Activated B cell treated with CpG ODN at 0.5 μM for 24 hours (primary cell): ENCODE measurements at regions of chr14 and their contacts with region 1.

Region 1: DNA sequence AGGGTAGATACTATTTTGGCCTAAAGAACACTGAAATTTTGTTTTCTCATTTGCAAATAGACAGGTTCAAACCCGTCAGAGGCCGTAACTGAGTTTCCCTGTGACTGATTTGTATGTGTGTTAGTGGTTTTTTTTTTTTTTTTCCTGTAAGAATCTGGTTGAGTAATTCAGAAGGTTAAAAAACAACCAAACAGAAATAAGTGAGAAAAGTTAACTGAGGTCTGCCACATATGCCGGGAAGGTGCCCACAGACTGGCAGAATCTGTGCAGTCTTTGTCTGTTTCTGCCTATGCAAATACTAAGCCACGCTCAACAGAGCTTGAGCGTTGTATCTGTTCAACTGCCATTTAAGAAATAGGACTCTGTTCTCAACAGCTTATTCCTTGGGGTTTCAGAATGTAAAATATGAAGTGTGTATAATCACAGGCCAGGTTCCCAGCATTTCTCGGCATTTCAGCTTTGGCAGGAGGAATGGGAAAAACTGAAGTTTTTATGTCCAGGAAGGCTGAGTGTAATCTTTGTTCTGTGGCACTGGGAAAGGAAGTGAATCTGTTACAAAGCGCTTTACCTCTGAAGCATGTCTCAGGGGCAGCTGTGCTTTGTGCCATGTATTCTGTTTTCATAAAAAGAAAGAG is 181.9 kb downstream of the PRKCH start:
- DNase-seq: no peak
- ATAC-seq: peak; percentile 88
- H3K4me3 Mint-ChIP-seq: peak overlapping the region; percentile 82
- H3K27ac Mint-ChIP-seq: peak overlapping the region; percentile 99
- H3K4me1 Mint-ChIP-seq: peaks cover 97% of the 10 kb centered on the region
- H3K27me3 Mint-ChIP-seq: no peaks in the 10 kb centered on the region
- CTCF ChIP-seq: no peak

Region 2: GRCh38 chr14:61489932-61490331 is 13.4 kb before region 1 on chr14:
- CTCF ChIA-PET with region 1: interaction called, 3 read pairs
- POLR2A ChIA-PET with region 1: interaction called, 28 read pairs
- intact Hi-C with region 1: loop called (anchors 1 kb)
- DNase-seq: no peak
- ATAC-seq: peak; percentile 67
- H3K4me3 Mint-ChIP-seq: peak overlapping the region; percentile 19
- H3K27ac Mint-ChIP-seq: peak overlapping the region; percentile 33
- H3K4me1 Mint-ChIP-seq: peaks cover 27% of the 10 kb centered on the region
- H3K27me3 Mint-ChIP-seq: no peaks in the 10 kb centered on the region
- CTCF ChIP-seq: no peak

Region 3: DNA sequence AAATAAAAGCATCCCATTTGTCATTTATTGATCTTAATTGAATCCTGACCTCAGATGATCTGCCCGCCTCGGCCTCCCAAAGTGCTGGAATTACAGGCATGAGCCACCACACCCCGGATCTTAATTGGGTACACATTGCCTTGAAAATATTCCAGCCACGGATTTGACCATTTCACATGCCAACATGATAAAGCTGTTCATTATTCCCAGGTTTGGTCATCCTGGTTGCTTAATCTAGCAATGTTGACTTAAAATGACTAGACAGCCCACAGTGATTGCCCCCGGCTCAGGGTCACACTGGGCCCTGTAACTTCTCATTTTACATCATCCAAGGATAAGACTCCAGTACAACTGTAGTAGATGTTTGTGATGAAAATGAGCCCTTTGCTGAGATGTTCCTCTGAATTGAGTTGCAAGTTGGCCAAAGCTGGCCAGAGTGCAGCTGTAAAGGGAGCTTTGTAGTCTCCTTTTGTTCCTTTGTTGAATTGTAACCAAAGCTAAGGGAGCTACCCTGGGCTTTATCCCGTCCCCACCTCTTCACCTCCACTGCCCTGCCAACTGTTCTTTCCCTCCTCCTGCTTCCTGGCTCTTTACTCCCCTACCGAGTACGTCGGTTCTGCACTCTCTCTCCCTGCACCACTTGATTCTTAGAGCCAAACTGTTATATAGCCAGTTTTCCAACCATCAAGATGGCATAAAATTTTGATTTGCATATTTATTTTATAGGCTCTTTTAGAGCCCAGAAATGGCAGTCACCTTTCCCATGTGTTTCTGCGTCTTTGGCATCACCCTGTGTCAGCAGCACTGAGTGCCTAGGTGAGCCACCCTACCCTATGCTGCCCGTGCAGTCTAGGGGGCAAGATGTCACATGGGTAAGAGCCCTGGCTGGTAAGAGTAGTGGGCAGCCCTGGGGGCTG is 50.7 kb after region 1 on chr14:
- CTCF ChIA-PET with region 1: interaction called, 3 read pairs
- POLR2A ChIA-PET with region 1: interaction called, 102 read pairs
- intact Hi-C with region 1: loop called (anchors 1 kb)
- DNase-seq: no peak
- ATAC-seq: no peak
- H3K4me3 Mint-ChIP-seq: peak overlapping the region; percentile 75
- H3K27ac Mint-ChIP-seq: peak overlapping the region; percentile 97
- H3K4me1 Mint-ChIP-seq: peaks cover 67% of the 10 kb centered on the region
- H3K27me3 Mint-ChIP-seq: no peaks in the 10 kb centered on the region
- CTCF ChIP-seq: no peak

Region 4: GRCh38 chr14:61620130-61620946 is 117.1 kb after region 1 on chr14:
- CTCF ChIA-PET with region 1: no interaction called
- POLR2A ChIA-PET with region 1: interaction called, 13 read pairs
- intact Hi-C with region 1: no loop called
- DNase-seq: no peak
- ATAC-seq: no peak
- H3K4me3 Mint-ChIP-seq: no peak overlapping the region
- H3K27ac Mint-ChIP-seq: no peak overlapping the region
- H3K4me1 Mint-ChIP-seq: peaks cover 6% of the 10 kb centered on the region
- H3K27me3 Mint-ChIP-seq: no peaks in the 10 kb centered on the region
- CTCF ChIP-seq: no peak

Region 5: DNA sequence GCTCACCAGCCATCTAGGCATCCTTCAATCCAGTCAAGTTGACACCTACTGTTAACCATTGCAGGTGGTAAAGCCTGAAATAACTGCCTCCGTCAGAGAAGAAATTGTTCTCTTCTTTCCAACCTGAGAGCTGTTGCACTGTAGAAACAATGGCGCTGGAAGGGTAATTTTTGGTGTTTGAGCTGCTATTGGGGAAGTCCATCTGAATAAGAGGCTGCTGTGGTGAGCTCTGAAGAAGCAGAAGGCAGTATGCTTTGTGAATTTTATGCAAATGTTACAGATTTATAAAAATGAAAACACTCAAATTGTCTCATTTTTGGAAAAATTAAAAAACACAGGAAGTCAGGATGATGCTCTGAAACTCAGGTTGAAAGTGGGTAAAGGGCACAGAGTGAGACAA is 319.2 kb after region 1 on chr14:
- CTCF ChIA-PET with region 1: no interaction called
- POLR2A ChIA-PET with region 1: no interaction called
- intact Hi-C with region 1: no loop called
- DNase-seq: no peak
- ATAC-seq: no peak
- H3K4me3 Mint-ChIP-seq: no peak overlapping the region
- H3K27ac Mint-ChIP-seq: no peak overlapping the region
- H3K4me1 Mint-ChIP-seq: no peaks in the 10 kb centered on the region
- H3K27me3 Mint-ChIP-seq: peaks cover 11% of the 10 kb centered on the region
- CTCF ChIP-seq: no peak